Activated CD8-positive, alpha-beta memory T cell treated with anti-CD3 and anti-CD28 coated beads, Interleukin-2, amount 10 ng/mL, durations not matched to agents 7 days and 5 days (primary cell): ENCODE measurements at regions of chr5 and their contacts with region 1.

Region 1: DNA sequence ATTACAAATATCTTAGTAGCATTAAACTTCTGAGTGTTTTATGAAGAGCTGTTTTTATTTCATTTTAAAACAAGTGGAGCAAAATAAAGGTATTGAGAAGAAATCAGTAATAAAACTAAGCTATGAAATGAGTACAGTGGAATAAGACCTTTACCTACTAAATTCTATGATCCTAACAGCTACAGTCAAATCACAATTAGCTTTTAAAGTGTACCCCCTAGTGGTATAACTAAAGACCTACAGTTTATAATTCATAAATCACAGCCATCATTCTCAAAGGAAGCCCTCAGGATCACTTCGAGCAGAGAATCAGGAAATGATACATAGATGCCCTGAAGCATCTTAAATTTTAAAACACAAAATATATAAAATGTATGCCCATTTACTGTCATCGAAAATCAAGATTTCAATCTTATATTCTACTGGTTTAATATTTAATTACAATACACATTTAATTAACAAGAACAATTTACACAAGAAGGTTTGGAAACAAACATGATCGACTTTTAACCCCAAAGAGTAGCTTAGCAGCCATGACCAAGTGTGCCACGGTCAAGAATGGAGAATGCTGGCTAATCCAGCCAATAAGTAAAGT is 12.3 kb downstream of the CCNH start:
- DNase-seq: no peak
- ATAC-seq: peak; percentile 70
- H3K4me3 Mint-ChIP-seq: no peak overlapping the region
- H3K27ac Mint-ChIP-seq: no peak overlapping the region
- H3K4me1 Mint-ChIP-seq: peaks cover 15% of the 10 kb centered on the region
- H3K27me3 Mint-ChIP-seq: no peaks in the 10 kb centered on the region

Region 2: DNA sequence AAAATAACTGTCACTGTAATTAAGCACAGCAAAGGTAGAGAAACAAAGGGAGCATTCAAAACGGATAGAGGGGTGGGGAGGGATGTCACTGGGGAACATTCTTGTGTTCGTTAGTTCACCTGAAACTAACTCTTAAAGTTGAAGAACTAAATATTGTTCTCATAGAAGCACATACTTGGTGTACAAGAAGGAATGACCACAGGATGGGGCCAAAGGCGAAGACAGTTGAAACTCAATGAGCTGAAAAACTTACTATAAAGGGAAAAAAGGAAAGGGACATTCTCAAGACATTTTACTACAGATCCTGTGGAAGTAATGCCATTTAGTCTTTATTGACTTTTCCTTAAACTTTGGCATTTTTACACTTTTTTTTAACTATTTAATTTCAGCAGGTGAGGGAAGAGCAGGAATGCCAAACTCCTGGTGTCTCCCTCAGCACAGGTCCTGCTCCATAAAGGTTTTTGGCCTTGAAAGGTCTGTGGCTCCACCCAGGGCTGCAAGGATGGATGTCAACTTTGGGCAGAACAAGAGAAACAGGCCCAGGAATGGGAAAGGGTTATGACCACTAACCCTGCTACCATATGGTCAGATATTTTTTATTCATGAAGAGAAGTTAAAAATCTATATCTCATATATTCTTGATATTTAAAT is 330.3 kb before region 1 on chr5:
- CTCF ChIA-PET with region 1: interaction called, 10 read pairs
- DNase-seq: peak; percentile 43
- ATAC-seq: no peak
- H3K4me3 Mint-ChIP-seq: no peak overlapping the region
- H3K27ac Mint-ChIP-seq: peak overlapping the region; percentile 51
- H3K4me1 Mint-ChIP-seq: peaks cover 29% of the 10 kb centered on the region
- H3K27me3 Mint-ChIP-seq: no peaks in the 10 kb centered on the region

Region 3: DNA sequence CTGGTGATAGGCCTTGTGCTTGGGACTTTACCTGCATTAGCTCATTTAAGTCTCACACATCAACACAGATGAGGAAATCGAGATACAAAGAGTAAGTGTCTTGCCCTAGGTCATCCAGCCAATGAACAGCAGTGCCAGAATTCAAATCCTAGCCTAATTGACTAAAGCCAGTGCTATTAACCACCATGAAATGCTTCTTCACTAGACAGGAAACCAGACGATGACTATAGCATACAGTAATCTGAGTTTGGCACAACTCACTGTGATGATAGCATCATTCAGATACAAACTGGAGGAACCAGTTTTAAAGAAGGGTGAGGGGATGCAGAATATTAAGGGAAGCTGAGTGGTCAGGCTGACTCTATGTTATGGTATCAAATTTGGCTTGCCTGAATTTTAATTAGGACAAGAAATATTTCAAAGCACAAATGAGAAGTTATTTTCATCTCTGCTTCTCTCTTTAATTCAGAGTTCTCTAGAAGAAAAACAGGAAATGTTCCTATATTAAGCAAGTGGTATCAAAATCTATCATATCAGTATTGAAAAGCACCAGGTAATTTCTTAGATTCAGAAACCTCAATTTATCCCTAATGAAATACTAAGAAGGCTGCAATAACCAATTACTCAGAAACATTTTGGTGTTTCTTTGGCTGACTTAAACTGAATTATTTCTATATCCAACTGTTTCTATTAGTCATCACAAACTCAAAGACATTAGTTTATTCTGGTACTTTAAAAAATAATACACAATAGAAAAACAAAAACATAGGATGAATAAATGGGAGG is 279.7 kb before region 1 on chr5:
- CTCF ChIA-PET with region 1: no interaction called
- DNase-seq: peak; percentile 52
- ATAC-seq: peak; percentile 58
- H3K4me3 Mint-ChIP-seq: peak overlapping the region; percentile 6
- H3K27ac Mint-ChIP-seq: peak overlapping the region; percentile 93
- H3K4me1 Mint-ChIP-seq: peaks cover 60% of the 10 kb centered on the region
- H3K27me3 Mint-ChIP-seq: no peaks in the 10 kb centered on the region

Region 4: GRCh38 chr5:87151547-87151946 is 248.9 kb before region 1 on chr5:
- CTCF ChIA-PET with region 1: no interaction called
- DNase-seq: no peak
- ATAC-seq: peak; percentile 51
- H3K4me3 Mint-ChIP-seq: no peak overlapping the region
- H3K27ac Mint-ChIP-seq: no peak overlapping the region
- H3K4me1 Mint-ChIP-seq: peaks cover 12% of the 10 kb centered on the region
- H3K27me3 Mint-ChIP-seq: no peaks in the 10 kb centered on the region

Region 5: DNA sequence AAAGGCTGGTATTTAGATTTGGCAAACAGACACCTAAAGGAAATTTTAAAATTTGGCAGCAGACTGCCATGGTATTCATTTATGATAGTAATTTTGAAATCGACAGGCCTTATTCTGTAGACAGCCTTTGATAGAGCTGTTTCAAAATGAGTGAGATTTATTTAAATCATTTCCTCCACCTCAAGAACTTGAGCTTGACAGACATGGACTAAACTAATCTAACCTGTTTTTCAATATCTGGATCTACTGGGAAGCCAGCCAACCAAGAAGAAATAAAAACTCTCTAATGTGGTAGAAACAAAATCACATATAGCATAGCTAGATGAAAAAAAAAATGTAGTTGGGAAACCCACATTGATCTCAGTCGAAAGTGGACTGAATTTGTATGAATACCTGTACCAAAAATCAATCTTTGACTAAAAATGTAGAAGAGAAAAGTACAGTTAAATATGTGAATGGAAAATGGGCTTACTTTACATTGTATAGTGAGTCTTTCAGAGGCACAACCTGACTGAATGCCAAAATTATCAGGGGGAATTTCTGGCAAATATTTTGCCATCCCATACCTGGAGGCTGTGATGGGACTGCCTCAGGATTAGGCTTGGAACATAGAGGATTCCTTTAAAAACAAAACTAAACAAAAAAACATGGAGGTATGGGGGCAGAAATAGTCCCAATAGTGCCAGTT is 189.5 kb before region 1 on chr5:
- CTCF ChIA-PET with region 1: no interaction called
- DNase-seq: no peak
- ATAC-seq: no peak
- H3K4me3 Mint-ChIP-seq: no peak overlapping the region
- H3K27ac Mint-ChIP-seq: no peak overlapping the region
- H3K4me1 Mint-ChIP-seq: peaks cover 26% of the 10 kb centered on the region
- H3K27me3 Mint-ChIP-seq: no peaks in the 10 kb centered on the region

Region 6: GRCh38 chr5:87412630-87413342 is 12.4 kb after region 1 on chr5 and contains the start of gene CCNH:
- CTCF ChIA-PET with region 1: interaction called, 12 read pairs
- DNase-seq: peak; percentile 99
- ATAC-seq: peak; percentile 98
- H3K4me3 Mint-ChIP-seq: peak within 1 kb of the TSS; percentile 96
- H3K27ac Mint-ChIP-seq: peak within 1 kb of the TSS; percentile 91
- H3K4me1 Mint-ChIP-seq: peaks cover 38% of the 10 kb centered on the region
- H3K27me3 Mint-ChIP-seq: no peaks in the 10 kb centered on the region
- total RNA-seq, gene CCNH: 62.4 to 67.3 TPM